Pancreas (tissue), 10 donors: ENCODE measurements at regions of chr6 and their contacts with region 1.

Region 1: GRCh38 chr6:10429638-10430427 is 15.0 kb upstream of the TFAP2A start:
- DNase-seq: peak in 1 of 6 donors; percentile 37
- ATAC-seq: peak; percentile 63 to 83 (median 80)
- H3K4me3 ChIP-seq: no peak overlapping the region
- H3K27ac ChIP-seq: no peak overlapping the region
- H3K4me1 ChIP-seq: no peaks in the 10 kb centered on the region
- H3K27me3 ChIP-seq: peaks cover 0 to 28% (median 5%) of the 10 kb centered on the region in 4 donors
- CTCF ChIP-seq: peak in 2 of 4 donors; percentile 23 to 37

Region 2: GRCh38 chr6:8983188-8983688 is 1446.6 kb before region 1 on chr6:
- intact Hi-C with region 1: loop called in 1 of 3 experiments (anchors 10 kb)
- DNase-seq: peak; percentile 20 to 79 (median 62)
- ATAC-seq: peak; percentile 79 to 99 (median 96)
- H3K4me3 ChIP-seq: no peak overlapping the region
- H3K27ac ChIP-seq: no peak overlapping the region
- H3K4me1 ChIP-seq: no peaks in the 10 kb centered on the region
- H3K27me3 ChIP-seq: no peaks in the 10 kb centered on the region
- CTCF ChIP-seq: peak; percentile 86 to 97 (median 89)